Cardiac septum (tissue), 1 donor: ENCODE measurements at regions of chr15 and their contacts with region 1.

Region 1: GRCh38 chr15:52528991-52529926 is 579 bp upstream of the MYO5A start:
- DNase-seq: peak; percentile 85

Region 2: DNA sequence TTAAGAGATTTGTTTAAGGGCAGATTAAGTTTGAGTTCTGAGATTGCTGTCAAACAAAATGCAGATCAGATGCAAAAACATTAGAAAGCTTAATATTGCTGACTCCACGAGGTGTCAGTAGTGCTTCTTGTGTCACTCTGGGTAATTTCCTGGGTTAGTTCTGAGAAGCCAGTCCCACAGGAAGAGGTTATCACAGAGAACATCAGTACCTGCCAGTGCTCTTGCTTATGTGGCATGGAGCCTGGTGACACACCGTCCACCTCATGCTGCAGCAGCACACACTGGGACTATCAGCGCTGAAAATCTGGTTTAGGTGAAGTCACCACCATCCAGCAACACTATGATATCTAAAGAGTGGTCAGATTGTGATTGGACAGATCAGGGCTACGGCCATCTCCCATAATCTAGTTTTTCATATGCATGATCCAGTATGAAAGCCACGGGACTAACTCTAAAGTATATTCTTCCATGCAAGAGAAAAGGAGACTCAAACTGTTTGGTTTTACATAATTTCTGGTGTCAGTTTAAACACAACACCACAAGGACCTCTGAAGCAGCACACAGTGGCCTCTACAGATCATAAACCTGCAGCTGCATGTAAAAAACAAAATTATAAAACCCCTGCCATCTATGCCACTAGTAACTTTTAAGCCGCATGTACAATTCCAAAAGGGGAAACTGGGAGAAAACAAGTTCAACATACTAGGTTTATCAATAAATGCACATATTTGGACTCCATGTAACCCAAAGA is 197.6 kb before region 1 on chr15:
- intact Hi-C with region 1: loop called (anchors 10 kb)
- DNase-seq: no peak

Region 3: GRCh38 chr15:52481915-52482314 is 47.3 kb before region 1 on chr15:
- intact Hi-C with region 1: loop called (anchors 5 kb)
- DNase-seq: no peak